Activated B cell treated with CpG ODN at 0.5 μM for 24 hours (primary cell): ENCODE measurements at regions of chr2 and their contacts with region 1.

Region 1: GRCh38 chr2:205596581-205596980 is 85.7 kb upstream of the NRP2 start:
- DNase-seq: no peak
- ATAC-seq: no peak
- H3K4me3 Mint-ChIP-seq: no peak overlapping the region
- H3K27ac Mint-ChIP-seq: no peak overlapping the region
- H3K4me1 Mint-ChIP-seq: no peaks in the 10 kb centered on the region
- H3K27me3 Mint-ChIP-seq: peaks cover 4% of the 10 kb centered on the region
- CTCF ChIP-seq: no peak

Region 2: GRCh38 chr2:205814039-205814364 is 217.4 kb after region 1 on chr2:
- CTCF ChIA-PET with region 1: no interaction called
- POLR2A ChIA-PET with region 1: no interaction called
- intact Hi-C with region 1: loop called (anchors 5 kb)
- DNase-seq: no peak
- ATAC-seq: no peak
- H3K4me3 Mint-ChIP-seq: no peak overlapping the region
- H3K27ac Mint-ChIP-seq: no peak overlapping the region
- H3K4me1 Mint-ChIP-seq: no peaks in the 10 kb centered on the region
- H3K27me3 Mint-ChIP-seq: peaks cover 7% of the 10 kb centered on the region
- CTCF ChIP-seq: no peak